ENCODE measurements at regions of chr10 and their contacts with region 1.

Region 1: DNA sequence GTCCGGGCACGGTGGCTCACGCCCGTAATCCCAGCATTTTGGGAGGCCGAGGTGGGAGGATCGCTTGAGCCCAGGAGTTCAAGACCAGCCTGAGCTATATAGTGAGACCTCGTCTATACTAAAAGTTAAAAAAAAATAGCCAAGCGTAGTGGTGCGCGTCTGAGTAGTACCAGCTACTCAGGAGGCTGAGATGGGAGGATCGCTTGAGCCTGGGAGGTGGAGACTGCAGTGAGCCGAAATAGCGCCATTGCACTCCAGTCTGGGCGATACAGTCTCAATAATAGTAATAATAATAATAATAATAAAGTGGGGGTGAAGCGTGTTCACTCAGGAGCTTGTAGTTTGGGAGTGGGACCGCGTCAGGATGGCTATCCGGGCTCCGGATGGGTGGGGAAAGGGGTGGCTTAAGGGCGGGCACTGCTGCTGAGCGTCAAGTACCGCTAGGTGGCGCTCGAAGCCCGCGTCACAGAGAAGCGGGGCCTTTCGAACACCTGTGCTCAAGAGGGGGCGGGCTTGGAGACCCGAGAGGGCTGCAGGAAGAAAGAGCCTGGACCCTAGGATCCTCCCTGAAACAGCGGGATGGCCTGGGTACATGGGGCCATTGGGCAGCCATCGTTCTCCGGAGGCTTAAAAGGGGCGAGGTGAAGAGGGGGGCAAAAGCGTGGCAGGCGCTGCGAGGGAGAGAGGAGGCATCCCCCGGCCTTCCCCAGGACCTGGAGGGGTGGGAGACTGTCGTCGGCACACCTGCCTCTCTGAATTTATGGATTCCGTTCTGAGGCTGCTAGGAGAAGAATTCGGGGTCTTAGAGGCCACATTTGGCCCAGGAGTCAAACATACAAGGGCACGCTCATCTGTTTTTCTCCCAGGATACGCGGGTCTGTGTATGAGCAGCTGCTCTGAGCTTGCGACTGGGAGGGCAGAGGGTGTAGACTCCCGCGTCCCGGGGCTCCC is 14.5 kb downstream of the LBX1 start:
- DNase-seq: peak; percentile 84
- H3K4me3 ChIP-seq: peak overlapping the region; percentile 19 to 67; a peak in 3 of 4 replicates
- H3K27ac ChIP-seq: no peak overlapping the region
- H3K4me1 ChIP-seq: peaks cover 0 to 35% of the 10 kb centered on the region in 2 experiments; a peak in 2 of 4 replicates
- H3K27me3 ChIP-seq: peaks cover 86% of the 10 kb centered on the region
- CTCF ChIP-seq: peak; percentile 93
- EP300 ChIP-seq: no peak
- RAD21 ChIP-seq: peak; percentile 77

Region 2: DNA sequence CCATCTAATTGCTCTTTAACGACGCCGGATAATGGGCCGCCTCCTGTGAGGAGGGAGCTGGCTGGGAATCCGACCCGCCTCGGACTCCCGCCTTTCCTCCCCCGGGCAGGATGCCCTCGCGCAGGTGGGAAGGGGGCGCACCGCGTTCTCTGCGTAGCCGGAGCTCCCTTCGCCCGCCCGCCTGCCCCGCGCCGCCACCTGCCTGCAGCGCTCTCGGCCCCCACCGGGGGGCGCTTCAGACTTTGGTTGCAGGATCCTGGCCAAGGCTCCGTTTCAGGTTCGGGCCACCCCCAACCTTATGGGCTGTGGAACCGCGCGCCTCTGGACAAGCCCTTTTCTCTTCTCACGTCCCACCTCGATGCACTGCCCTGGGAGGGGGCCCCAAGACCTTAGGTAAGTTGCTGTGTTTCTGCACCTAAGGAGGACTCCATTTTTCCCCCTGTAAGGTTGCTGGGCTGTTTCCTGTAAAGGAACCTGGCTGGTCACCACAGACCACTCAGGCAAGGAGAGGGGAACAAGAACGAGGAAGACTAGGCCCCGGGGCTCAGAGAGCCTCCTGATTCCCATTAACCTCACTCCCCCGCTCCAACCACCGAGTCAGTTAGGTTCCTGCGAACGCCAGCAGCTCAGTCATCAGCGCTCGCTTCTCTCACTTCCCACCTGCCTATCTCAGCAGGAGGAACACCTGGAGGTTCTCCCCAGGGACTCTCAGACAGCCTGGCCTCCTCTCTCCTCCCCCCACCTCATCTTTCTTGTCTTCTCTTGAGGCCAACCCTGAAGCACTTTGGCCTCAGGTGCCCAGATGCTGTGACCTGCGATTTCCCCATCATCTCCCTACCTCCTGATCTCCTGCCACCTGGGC is 164.3 kb before region 1 on chr10:
- CTCF ChIA-PET with region 1: no interaction called
- POLR2A ChIA-PET with region 1: no interaction called
- DNase-seq: peak; percentile 87
- H3K4me3 ChIP-seq: peak overlapping the region; percentile 32 to 33; a peak in 3 of 4 replicates
- H3K27ac ChIP-seq: no peak overlapping the region
- H3K4me1 ChIP-seq: peaks cover 4 to 5% of the 10 kb centered on the region in 2 experiments; a peak in 1 of 4 replicates
- H3K27me3 ChIP-seq: no peaks in the 10 kb centered on the region
- CTCF ChIP-seq: peak; percentile 75
- EP300 ChIP-seq: no peak
- RAD21 ChIP-seq: peak; percentile 42

Region 3: GRCh38 chr10:101161494-101162299 is 53.0 kb before region 1 on chr10:
- CTCF ChIA-PET with region 1: interaction called, 20 read pairs
- POLR2A ChIA-PET with region 1: no interaction called
- DNase-seq: peak; percentile 77
- H3K4me3 ChIP-seq: peak overlapping the region; percentile 48 to 64
- H3K27ac ChIP-seq: no peak overlapping the region
- H3K4me1 ChIP-seq: peaks cover 0 to 10% of the 10 kb centered on the region in 2 experiments; a peak in 1 of 4 replicates
- H3K27me3 ChIP-seq: peaks cover 33% of the 10 kb centered on the region
- CTCF ChIP-seq: peak; percentile 96
- EP300 ChIP-seq: no peak
- RAD21 ChIP-seq: peak; percentile 85

Region 4: GRCh38 chr10:101238732-101239105 is 24.0 kb after region 1 on chr10:
- CTCF ChIA-PET with region 1: interaction called, 15 read pairs
- POLR2A ChIA-PET with region 1: no interaction called
- DNase-seq: no peak
- H3K4me3 ChIP-seq: peak overlapping the region in 1 of 2 experiments; percentile 32; a peak in 1 of 4 replicates
- H3K27ac ChIP-seq: no peak overlapping the region
- H3K4me1 ChIP-seq: no peaks in the 10 kb centered on the region
- H3K27me3 ChIP-seq: peaks cover 55% of the 10 kb centered on the region
- CTCF ChIP-seq: no peak
- EP300 ChIP-seq: no peak
- RAD21 ChIP-seq: no peak

Region 5: GRCh38 chr10:101441541-101442455 is 227.1 kb after region 1 on chr10:
- CTCF ChIA-PET with region 1: interaction called, 32 read pairs
- POLR2A ChIA-PET with region 1: no interaction called
- DNase-seq: peak; percentile 65
- H3K4me3 ChIP-seq: no peak overlapping the region
- H3K27ac ChIP-seq: no peak overlapping the region
- H3K4me1 ChIP-seq: peaks cover 0 to 9% of the 10 kb centered on the region in 2 experiments; a peak in 2 of 4 replicates
- H3K27me3 ChIP-seq: no peaks in the 10 kb centered on the region
- CTCF ChIP-seq: peak; percentile 68
- EP300 ChIP-seq: no peak
- RAD21 ChIP-seq: peak; percentile 90

Region 6: DNA sequence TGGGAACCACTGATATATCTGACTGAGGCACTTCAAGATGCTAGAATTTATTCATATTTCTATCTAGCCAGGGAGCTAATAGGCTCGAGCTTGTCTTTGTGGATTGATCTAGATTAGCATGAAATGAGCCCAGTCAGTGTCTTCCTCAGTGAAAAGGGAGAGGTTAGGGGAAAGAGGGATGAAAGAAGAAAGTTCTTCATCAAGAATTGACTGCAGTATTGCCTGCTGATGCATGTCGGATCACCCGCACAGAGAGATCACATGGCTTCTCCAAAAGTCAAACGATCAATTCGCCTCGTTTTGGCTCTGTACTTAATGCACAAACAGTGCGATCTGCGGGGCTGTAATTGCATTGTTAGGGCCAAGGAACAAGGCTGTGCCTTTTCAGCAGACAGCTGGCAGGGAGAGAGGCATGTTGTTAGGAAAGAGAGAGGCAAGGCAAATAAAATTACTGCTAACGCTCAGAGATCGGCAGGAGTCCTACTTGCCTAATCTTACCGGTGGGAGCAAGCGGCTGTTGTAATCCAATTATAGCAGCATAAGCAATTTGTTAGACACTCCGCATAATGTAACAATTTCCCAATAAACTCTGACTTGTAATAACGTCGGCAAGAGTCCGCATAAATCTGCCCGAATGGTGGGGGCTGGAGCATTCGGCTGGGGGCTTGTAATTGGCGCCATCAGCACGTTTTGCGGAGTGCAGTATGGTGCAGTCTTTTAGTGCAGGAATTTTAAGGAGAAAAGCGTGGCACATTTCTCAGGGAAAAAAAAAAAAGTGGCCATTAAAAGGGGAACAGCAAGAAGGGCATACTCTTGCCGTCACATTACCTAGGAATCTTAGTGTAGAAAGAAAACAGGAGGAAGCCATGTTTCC is 271.2 kb after region 1 on chr10:
- CTCF ChIA-PET with region 1: interaction called, 23 read pairs
- POLR2A ChIA-PET with region 1: no interaction called
- DNase-seq: peak; percentile 51
- H3K4me3 ChIP-seq: peak overlapping the region in 1 of 2 experiments; percentile 42; a peak in 2 of 4 replicates
- H3K27ac ChIP-seq: peak overlapping the region in 1 of 2 experiments; percentile 43; a peak in 2 of 4 replicates
- H3K4me1 ChIP-seq: peaks cover 6 to 16% of the 10 kb centered on the region in 2 experiments; a peak in 3 of 4 replicates
- H3K27me3 ChIP-seq: no peaks in the 10 kb centered on the region
- CTCF ChIP-seq: no peak
- EP300 ChIP-seq: no peak; a peak in 1 of 4 replicates
- RAD21 ChIP-seq: no peak

Region 7: GRCh38 chr10:101587725-101588653 is 373.3 kb after region 1 on chr10 and contains the starts of genes DPCD and POLL:
- CTCF ChIA-PET with region 1: interaction called, 38 read pairs
- POLR2A ChIA-PET with region 1: no interaction called
- DNase-seq: peak; percentile 97
- H3K4me3 ChIP-seq: peak within 1 kb of the TSS; percentile 92 to 94
- H3K27ac ChIP-seq: peak within 1 kb of the TSS; percentile 17 to 76; a peak in 2 of 4 replicates
- H3K4me1 ChIP-seq: peaks cover 13 to 26% of the 10 kb centered on the region in 2 experiments; a peak in 2 of 4 replicates
- H3K27me3 ChIP-seq: no peaks in the 10 kb centered on the region
- CTCF ChIP-seq: no peak
- EP300 ChIP-seq: no peak
- RAD21 ChIP-seq: no peak
- polyA plus RNA-seq, gene DPCD: 106 and 121 TPM in 2 replicates
- polyA plus RNA-seq, gene POLL: 22.0 and 27.3 TPM in 2 replicates

Measured in SK-N-SH (cell line).